Mucosa of descending colon (tissue), 3 donors: ENCODE measurements at regions of chr22 and their contacts with region 1.

Region 1: GRCh38 chr22:36194971-36195370 is 6.6 kb downstream of the APOL4 start:
- DNase-seq: peak in 2 of 3 donors; percentile 39 to 64
- ATAC-seq: peak; percentile 72
- H3K4me3 ChIP-seq: no peak overlapping the region
- H3K4me1 ChIP-seq: no peaks in the 10 kb centered on the region
- CTCF ChIP-seq: peak; percentile 41

Region 2: DNA sequence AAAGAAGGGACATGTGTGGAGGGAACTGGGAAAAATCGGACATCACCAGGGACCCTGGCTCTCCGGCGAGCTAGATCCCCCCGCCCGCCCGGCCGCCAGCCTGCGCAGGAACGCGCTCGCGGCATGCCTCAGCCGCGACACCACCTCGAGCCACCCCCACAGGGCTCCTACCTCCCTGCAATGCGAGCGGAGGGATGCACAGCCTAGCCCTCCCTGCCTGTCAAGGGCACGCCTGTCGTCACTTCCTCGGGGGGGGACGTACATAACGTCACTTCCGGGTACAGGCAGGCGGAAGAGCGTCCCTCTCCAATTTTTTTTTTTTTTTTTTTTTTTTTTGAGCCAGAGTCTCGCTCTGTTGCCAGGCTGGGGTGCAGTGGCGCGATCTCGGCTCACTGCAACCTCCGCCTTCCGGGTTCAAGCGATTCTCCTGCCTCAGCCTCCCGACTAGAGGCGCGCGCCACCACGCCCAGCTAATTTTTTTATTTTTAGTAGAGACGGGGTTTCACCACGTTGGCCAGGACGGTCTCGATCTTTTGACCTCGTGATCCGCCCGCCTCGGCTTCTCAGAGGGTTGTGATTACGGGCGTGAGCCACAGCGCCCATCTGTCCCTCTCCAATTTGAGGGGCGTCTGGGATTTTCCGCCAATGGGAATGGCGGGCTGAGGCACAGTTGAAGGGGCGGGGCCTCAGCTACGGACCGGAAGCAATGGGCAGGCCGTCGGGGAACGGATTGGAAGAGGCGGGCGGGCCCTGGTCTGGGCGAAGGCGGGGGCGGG is 286.6 kb after region 1 on chr22 and contains the start of gene TXN2:
- intact Hi-C with region 1: loop called in 1 of 2 experiments (anchors 10 kb)
- DNase-seq: peak; percentile 96 to 98 (median 98)
- ATAC-seq: peak; percentile 94
- H3K4me3 ChIP-seq: peak within 1 kb of the TSS; percentile 56
- H3K4me1 ChIP-seq: peaks cover 9% of the 10 kb centered on the region
- CTCF ChIP-seq: no peak
- total RNA-seq, gene TXN2: 73.2 to 101 (median 95.8) TPM